ENCODE measurements at regions of chr22 and their contacts with region 1.

Region 1: DNA sequence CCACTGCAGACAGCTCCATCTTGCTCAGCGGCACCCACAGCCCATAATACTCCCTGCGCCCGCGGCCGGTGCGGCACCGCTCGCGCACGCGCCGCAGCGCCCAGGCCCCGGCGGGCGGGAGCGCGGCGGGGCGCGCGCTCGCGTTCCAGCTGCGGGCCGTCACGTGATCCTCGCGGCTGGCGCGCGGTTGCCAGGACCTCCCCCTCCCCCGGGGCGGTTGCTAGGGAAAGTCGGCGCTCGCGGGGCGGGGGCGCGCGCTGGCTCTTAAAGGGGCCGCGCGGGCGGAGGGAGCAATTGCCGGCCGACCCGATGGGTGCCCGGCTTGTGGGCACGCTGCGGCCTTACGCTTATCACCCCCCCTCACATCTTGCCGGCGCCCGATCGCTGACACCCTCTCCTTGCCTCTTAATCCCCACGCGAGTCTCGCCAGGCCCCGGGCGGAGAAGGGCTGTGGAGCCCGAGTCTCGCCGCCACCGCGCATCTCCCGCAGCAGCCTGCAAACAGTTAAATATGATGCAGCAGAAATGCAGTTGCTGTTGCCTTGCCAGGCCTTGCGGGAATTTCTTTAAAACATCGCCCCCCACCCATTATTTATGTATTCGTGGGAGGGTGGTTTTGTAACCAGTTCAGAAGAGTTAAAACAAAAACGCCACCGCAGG is at the start of gene CBX6:
- DNase-seq: peak; percentile 98
- H3K4me3 Mint-ChIP-seq: peak within 1 kb of the TSS; percentile 82
- H3K27ac Mint-ChIP-seq: peak within 1 kb of the TSS; percentile 83
- H3K4me1 Mint-ChIP-seq: peaks cover 36% of the 10 kb centered on the region
- H3K27me3 Mint-ChIP-seq: no peaks in the 10 kb centered on the region
- CTCF ChIP-seq: no peak
- total RNA-seq, gene CBX6: 140 and 152 TPM in 2 replicates

Region 2: DNA sequence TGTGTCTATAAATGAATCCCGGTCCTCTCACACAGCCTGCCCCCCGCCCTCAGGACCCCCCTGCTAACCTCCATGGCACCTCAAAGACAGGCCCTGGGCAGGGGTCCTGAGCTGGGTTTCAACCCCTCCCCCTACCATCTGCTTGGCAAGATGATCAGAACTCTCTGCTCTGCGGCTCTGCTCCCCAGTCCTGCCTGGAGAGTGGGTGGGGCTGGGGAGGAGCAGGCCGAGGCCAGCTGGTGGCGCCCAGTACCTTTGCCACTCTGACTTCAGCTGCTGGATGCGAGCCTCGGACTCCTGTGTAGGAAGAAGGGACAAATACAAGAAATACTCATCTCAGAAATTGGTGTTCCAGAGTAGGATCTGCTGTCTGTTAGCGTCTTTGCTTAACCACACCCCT is 131.5 kb before region 1 on chr22:
- CTCF ChIA-PET with region 1: no interaction called
- intact Hi-C with region 1: no loop called
- DNase-seq: no peak
- H3K4me3 Mint-ChIP-seq: no peak overlapping the region
- H3K27ac Mint-ChIP-seq: no peak overlapping the region
- H3K4me1 Mint-ChIP-seq: no peaks in the 10 kb centered on the region
- H3K27me3 Mint-ChIP-seq: no peaks in the 10 kb centered on the region
- CTCF ChIP-seq: no peak

Region 3: DNA sequence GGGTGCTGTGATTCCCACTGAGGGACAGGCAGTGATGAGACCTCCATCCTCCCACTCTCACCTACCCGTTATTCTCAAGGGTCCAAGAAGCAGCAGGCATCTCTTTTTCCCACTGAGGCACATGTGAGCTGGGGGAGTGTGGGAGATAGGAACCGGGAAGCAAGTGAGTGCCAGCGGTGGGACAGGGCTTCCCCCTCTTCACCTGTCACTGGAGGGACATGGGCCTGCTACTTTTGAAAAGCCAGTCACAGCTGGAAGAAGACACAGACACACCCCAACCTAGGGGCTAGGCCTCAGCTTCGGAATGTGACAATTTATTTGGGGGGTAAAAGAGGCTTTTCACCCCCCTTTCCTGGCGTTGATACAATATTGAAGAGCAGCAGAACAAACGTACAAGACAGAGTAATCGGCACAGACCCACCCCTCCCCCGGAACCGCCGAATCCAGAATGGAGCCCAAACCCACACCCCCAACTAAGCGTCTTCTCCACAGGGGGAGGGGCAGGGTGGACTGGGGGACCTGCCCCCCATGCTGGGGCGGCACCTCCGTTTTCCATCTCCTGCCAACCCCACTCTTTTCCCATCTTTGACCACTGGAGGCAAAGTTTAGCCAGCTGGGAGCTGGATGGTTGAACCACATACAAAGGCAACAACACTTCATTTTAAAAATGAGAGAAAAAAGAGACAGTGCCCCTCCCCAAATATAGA is 11.0 kb before region 1 on chr22:
- CTCF ChIA-PET with region 1: no interaction called
- intact Hi-C with region 1: no loop called
- DNase-seq: no peak
- H3K4me3 Mint-ChIP-seq: no peak overlapping the region
- H3K27ac Mint-ChIP-seq: peak overlapping the region; percentile 69
- H3K4me1 Mint-ChIP-seq: peaks cover 14% of the 10 kb centered on the region
- H3K27me3 Mint-ChIP-seq: no peaks in the 10 kb centered on the region
- CTCF ChIP-seq: peak; percentile 29

Region 4: GRCh38 chr22:38921119-38921518 is 48.8 kb after region 1 on chr22:
- CTCF ChIA-PET with region 1: interaction called, 21 read pairs
- intact Hi-C with region 1: no loop called
- DNase-seq: peak; percentile 93
- H3K4me3 Mint-ChIP-seq: peak overlapping the region; percentile 36
- H3K27ac Mint-ChIP-seq: peak overlapping the region; percentile 58
- H3K4me1 Mint-ChIP-seq: peaks cover 31% of the 10 kb centered on the region
- H3K27me3 Mint-ChIP-seq: no peaks in the 10 kb centered on the region
- CTCF ChIP-seq: no peak

Region 5: DNA sequence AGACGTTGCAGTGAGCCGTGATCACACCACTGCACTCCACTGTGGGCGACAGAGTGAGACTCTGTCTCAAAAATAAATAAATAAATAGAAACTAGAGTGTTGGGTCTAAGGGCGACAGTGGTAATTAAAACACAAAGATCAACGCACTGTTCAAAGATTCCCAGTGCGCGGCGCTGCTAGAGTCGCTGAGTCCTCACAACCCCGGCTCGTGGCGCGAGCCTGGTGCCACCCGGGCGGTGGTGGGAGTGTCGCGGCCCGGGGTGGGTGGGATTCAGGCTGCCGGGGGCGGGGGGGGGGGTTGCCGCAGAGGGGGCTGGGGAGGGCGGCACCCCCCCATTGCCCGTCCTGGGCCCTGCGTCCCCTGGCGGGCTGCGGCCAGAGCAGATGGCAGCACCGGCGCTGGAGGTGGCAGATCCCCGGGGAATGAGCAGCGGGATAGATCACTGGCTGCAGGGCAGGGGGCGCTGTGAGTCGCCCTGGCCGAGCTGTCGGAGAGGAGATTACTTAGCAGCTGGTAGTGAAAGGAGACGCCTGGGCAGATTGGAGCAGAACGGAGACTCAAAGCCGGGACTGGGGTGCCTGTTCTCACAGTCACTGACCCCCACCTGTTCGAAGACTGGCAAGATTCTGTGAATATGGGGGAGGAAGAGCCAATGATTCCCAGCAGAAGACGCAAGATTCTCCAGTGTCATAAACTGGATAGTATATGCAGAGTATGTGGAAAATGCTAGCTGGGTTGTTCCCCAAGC is 54.9 kb after region 1 on chr22:
- CTCF ChIA-PET with region 1: interaction called, 21 read pairs
- intact Hi-C with region 1: loop called (anchors 1 kb)
- DNase-seq: peak; percentile 91
- H3K4me3 Mint-ChIP-seq: peak overlapping the region; percentile 55
- H3K27ac Mint-ChIP-seq: peak overlapping the region; percentile 33
- H3K4me1 Mint-ChIP-seq: peaks cover 40% of the 10 kb centered on the region
- H3K27me3 Mint-ChIP-seq: no peaks in the 10 kb centered on the region
- CTCF ChIP-seq: peak; percentile 96

Region 6: GRCh38 chr22:39003165-39003638 is 130.9 kb after region 1 on chr22:
- CTCF ChIA-PET with region 1: interaction called, 33 read pairs
- intact Hi-C with region 1: loop called (anchors 1 kb)
- DNase-seq: peak; percentile 85
- H3K4me3 Mint-ChIP-seq: no peak overlapping the region
- H3K27ac Mint-ChIP-seq: no peak overlapping the region
- H3K4me1 Mint-ChIP-seq: no peaks in the 10 kb centered on the region
- H3K27me3 Mint-ChIP-seq: no peaks in the 10 kb centered on the region
- CTCF ChIP-seq: peak; percentile 76

Region 7: GRCh38 chr22:39123751-39124601 is 251.7 kb after region 1 on chr22:
- CTCF ChIA-PET with region 1: interaction called, 9 read pairs
- intact Hi-C with region 1: loop called (anchors 2 kb)
- DNase-seq: no peak
- H3K4me3 Mint-ChIP-seq: no peak overlapping the region
- H3K27ac Mint-ChIP-seq: no peak overlapping the region
- H3K4me1 Mint-ChIP-seq: peaks cover 11% of the 10 kb centered on the region
- H3K27me3 Mint-ChIP-seq: no peaks in the 10 kb centered on the region
- CTCF ChIP-seq: no peak

Region 8: DNA sequence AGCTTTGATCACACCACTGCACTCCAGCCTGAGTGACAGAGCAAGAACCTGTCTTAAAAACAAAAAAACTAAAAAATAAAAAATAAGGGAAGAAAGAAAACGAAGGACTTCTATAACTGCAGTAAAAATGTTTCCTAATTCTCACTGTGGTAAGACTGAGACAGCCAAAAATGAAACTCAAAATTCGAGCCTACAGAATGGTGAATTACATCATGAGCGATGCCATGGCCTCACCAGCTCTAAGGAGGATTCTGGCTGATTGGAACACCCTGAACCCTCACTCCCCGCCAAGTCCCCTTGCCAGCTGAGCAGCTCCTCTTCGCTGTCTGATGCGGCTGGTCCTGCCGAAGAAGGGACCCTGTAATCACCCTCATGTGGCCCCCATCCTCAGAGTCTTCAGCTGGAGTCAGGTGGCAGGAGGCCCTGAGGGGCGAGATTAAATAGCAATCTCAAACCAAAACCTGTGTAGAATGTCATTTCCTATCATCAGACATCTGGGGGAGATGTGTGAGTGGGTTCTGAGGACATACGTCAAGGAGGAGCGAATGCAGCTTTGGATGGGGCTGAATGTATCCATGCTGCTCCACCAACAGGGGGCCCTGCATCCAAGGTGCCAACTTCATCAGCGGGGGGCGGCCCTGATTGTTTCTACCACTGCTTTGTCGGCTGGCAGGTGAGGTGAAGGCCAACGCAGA is 343.3 kb after region 1 on chr22:
- CTCF ChIA-PET with region 1: no interaction called
- intact Hi-C with region 1: no loop called
- DNase-seq: no peak
- H3K4me3 Mint-ChIP-seq: no peak overlapping the region
- H3K27ac Mint-ChIP-seq: peak overlapping the region; percentile 83
- H3K4me1 Mint-ChIP-seq: peaks cover 36% of the 10 kb centered on the region
- H3K27me3 Mint-ChIP-seq: no peaks in the 10 kb centered on the region
- CTCF ChIP-seq: peak; percentile 42

Measured in Calu3 (cell line).